ENCODE measurements at regions of chr17 and their contacts with region 1.

Region 1: DNA sequence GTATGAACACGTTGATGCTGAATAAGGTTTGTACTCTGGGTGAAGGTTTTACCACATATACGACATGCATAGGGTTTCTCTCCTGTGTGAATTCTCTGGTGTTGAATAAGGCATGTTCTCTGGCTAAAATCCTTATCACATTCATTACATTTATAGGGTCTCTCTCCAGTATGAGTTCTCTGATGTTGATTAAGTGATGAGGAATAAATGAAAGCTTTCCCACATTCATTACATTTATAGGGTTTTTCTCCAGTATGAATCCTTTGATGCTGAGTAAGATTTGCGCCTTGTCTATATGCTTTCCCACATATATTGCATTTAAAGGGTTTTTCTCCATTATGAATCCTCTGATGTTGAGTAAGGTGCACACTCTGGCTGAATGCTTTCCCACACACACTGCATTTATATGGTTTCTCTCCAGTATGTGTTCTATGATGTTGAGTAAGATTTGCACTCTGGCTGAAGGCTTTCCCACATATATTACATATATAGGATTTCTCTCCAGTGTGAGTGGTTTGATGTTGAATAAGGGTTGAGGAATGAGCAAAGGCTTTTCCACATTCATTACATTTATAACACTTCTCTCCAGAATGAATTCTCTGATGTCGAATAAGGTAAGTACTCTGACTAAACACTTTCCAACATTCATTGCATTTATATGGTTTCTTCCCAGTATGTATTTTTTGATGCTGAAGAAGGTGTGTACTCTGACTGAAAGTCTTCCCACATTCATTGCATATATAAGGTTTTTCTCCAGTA is 16.9 kb downstream of the ZNF287 start:
- DNase-seq: no peak
- ATAC-seq: no peak
- H3K4me3 ChIP-seq: no peak overlapping the region
- H3K27ac ChIP-seq: no peak overlapping the region
- H3K4me1 ChIP-seq: no peaks in the 10 kb centered on the region
- H3K27me3 ChIP-seq: no peaks in the 10 kb centered on the region
- CTCF ChIP-seq: no peak
- POLR2A ChIP-seq: no peak
- RAD21 ChIP-seq: no peak

Region 2: DNA sequence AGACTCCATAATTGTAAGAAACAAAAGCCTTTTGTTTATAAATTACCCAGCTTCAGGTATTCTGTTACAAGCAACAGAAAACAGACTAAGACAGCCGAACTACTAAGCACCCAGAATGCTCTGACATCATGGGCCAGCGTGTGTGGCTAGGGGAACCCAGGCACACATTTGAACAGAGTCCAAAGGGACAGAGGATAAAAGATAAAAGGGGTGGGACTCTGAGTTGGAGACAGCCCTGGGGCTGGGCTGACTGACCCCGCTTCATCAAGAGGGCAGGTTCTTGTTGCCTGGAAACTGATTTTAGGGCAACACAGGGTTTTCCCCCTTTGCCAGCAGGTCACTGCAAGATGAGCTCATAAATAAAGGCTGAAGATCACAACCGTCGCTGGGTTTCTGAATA is 47.5 kb after region 1 on chr17:
- CTCF ChIA-PET with region 1: no interaction called
- POLR2A ChIA-PET with region 1: no interaction called
- RAD21 ChIA-PET with region 1: no interaction called
- intact Hi-C with region 1: loop called (anchors 10 kb)
- DNase-seq: no peak
- ATAC-seq: no peak
- H3K4me3 ChIP-seq: no peak overlapping the region
- H3K27ac ChIP-seq: no peak overlapping the region
- H3K4me1 ChIP-seq: no peaks in the 10 kb centered on the region
- H3K27me3 ChIP-seq: no peaks in the 10 kb centered on the region
- CTCF ChIP-seq: no peak
- POLR2A ChIP-seq: no peak
- RAD21 ChIP-seq: no peak

Region 3: GRCh38 chr17:16649585-16649984 is 97.5 kb after region 1 on chr17:
- CTCF ChIA-PET with region 1: no interaction called
- POLR2A ChIA-PET with region 1: no interaction called
- RAD21 ChIA-PET with region 1: no interaction called
- intact Hi-C with region 1: loop called (anchors 5 kb)
- DNase-seq: no peak
- ATAC-seq: no peak
- H3K4me3 ChIP-seq: no peak overlapping the region
- H3K27ac ChIP-seq: no peak overlapping the region
- H3K4me1 ChIP-seq: peaks cover 6 to 16% of the 10 kb centered on the region in 2 experiments; a peak in 3 of 4 replicates
- H3K27me3 ChIP-seq: no peaks in the 10 kb centered on the region
- CTCF ChIP-seq: no peak
- POLR2A ChIP-seq: no peak
- RAD21 ChIP-seq: no peak

Measured in HCT116 (cell line).